ENCODE measurements at regions of chr11 and their contacts with region 1.

Region 1: GRCh38 chr11:130069684-130070108 is at the start of gene APLP2:
- DNase-seq: peak; percentile 99
- ATAC-seq: peak; percentile 97
- total RNA-seq, gene APLP2: 285 TPM

Region 2: GRCh38 chr11:129895126-129896041 is 174.3 kb before region 1 on chr11 and contains the start of gene NFRKB:
- intact Hi-C with region 1: loop called (anchors 5 kb)
- DNase-seq: peak; percentile 96
- ATAC-seq: peak; percentile 100
- total RNA-seq, gene NFRKB: 11.5 TPM

Region 3: GRCh38 chr11:130103296-130103814 is 33.7 kb after region 1 on chr11:
- intact Hi-C with region 1: no loop called
- DNase-seq: no peak
- ATAC-seq: peak; percentile 73

Region 4: DNA sequence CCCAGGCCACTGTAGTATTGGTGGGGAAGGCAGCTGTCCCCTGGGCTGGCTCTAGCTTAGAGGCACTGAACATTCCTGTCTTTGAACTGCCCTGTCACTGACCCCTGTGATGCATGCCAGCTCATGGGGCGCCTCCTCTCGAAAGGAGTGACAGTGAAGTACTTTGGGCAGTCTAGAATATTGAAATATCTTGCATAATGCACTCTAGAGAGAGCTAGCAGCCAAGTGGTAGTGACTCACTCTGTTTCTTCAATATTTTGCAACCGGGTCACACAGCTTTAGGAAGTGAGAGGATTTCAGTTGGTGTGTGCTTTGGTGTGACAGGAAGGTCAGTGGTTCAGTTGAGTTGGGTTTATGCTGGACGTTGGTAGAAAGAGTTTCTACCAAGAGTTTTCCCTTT is 54.4 kb after region 1 on chr11:
- intact Hi-C with region 1: loop called (anchors 2 kb)
- DNase-seq: peak; percentile 88
- ATAC-seq: peak; percentile 96